Adrenal gland (tissue), 19 donors: ENCODE measurements at regions of chr3 and their contacts with region 1.

Region 1: DNA sequence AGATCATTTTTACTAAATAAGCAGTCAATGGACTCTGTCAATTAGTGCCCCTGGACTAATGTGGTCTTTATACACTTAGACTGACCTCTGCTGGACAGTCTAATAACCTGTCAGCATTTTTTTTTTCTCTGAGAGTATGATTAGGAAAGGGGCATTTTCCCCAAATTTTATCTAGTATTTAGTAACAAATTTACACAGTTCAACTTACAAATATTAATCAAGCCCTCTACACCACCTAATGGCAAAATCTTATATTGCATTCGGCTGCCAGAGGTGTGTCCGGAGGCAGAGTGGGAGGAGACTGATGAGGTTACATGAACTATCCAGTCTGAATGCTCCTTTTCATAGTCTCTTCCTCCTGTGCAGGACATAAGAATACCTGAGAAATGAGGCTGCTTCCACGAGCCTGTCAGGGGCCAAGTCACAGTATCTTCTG is 36.0 kb upstream of the COLQ start:
- DNase-seq: peak; percentile 54 to 84 (median 70)
- H3K4me3 ChIP-seq: no peak overlapping the region
- H3K27ac ChIP-seq: peak overlapping the region in 1 of 5 donors; percentile 1
- H3K4me1 ChIP-seq: peaks cover 0 to 13% of the 10 kb centered on the region in 2 donors
- H3K27me3 ChIP-seq: no peaks in the 10 kb centered on the region
- CTCF ChIP-seq: peak; percentile 45 to 79 (median 64)
- POLR2A ChIP-seq: no peak

Region 2: DNA sequence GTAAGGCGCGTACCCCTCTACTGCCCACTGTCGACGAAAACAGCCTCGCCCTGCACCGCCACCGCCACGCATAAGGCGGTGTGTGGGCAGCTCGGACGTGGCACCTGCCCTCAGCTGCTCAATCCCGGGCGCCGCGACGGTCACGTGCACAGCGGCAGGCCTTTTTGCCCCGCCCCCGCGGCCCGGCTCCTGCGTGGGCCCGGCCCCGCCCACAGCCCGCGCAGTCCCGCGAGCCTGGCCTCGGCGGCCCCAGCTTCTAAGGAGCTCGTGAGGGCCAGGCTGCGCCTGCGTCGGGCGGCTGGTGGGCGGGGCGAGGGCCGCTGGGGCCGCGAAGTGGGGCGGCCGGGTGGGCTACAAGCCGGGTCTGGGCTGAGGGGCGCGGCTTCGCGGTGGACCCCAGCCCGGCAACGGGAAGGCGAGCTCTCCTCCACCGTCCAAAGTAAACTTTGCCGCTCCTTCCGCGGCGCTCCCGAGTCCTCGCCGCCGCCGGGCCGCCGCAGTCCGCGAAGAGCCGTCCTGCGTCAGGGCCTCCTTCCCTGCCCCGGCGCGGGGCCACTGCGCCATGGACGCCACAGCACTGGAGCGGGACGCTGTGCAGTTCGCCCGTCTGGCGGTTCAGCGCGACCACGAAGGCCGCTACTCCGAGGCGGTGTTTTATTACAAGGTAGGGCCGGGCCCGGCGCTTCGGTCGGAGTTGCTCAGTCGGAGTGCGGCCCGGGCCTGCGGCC is 351.4 kb before region 1 on chr3 and contains the start of gene CAPN7:
- intact Hi-C with region 1: loop called in 1 of 2 experiments (anchors 10 kb)
- DNase-seq: peak; percentile 95 to 98 (median 96)
- H3K4me3 ChIP-seq: peak within 1 kb of the TSS; percentile 54 to 100 (median 92)
- H3K27ac ChIP-seq: peak within 1 kb of the TSS; percentile 98 to 100 (median 99)
- H3K4me1 ChIP-seq: peaks cover 20 to 33% of the 10 kb centered on the region in 2 donors
- H3K27me3 ChIP-seq: no peaks in the 10 kb centered on the region
- CTCF ChIP-seq: peak in 3 of 6 experiments; percentile 38 to 61 (median 39)
- POLR2A ChIP-seq: peak; percentile 79 to 96
- total RNA-seq, gene CAPN7: 31.1 to 54.9 (median 42.4) TPM

Region 3: GRCh38 chr3:15439476-15439875 is 118.1 kb before region 1 on chr3:
- intact Hi-C with region 1: loop called (anchors 5 to 10 kb)
- DNase-seq: peak in 3 of 7 donors; percentile 48 to 69 (median 57)
- H3K4me3 ChIP-seq: no peak overlapping the region
- H3K27ac ChIP-seq: no peak overlapping the region
- H3K4me1 ChIP-seq: peaks cover 0 to 22% of the 10 kb centered on the region in 2 donors
- H3K27me3 ChIP-seq: no peaks in the 10 kb centered on the region
- CTCF ChIP-seq: no peak
- POLR2A ChIP-seq: no peak

Region 4: DNA sequence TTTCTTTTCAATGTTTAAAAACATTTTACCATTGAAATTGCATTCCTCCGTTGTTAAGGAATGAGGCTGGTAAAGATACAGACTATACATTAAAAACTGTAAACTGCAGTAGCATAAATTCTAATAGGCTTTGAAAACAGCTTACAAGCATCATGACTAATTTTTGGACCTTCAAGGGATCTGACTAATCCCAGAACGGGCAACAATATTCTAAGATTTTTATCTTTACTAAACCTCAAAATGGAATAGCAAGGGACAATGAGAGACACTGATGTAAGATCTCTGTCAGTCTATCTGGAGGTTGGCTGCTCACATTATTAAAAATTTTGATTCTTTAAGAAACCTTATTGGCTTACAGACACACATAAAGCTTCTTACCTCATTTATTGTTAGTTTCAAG is 118.7 kb after region 1 on chr3:
- intact Hi-C with region 1: no loop called
- DNase-seq: no peak
- H3K4me3 ChIP-seq: no peak overlapping the region
- H3K27ac ChIP-seq: no peak overlapping the region
- H3K4me1 ChIP-seq: peaks cover 0 to 6% of the 10 kb centered on the region in 2 donors
- H3K27me3 ChIP-seq: no peaks in the 10 kb centered on the region
- CTCF ChIP-seq: no peak
- POLR2A ChIP-seq: no peak

Region 5: DNA sequence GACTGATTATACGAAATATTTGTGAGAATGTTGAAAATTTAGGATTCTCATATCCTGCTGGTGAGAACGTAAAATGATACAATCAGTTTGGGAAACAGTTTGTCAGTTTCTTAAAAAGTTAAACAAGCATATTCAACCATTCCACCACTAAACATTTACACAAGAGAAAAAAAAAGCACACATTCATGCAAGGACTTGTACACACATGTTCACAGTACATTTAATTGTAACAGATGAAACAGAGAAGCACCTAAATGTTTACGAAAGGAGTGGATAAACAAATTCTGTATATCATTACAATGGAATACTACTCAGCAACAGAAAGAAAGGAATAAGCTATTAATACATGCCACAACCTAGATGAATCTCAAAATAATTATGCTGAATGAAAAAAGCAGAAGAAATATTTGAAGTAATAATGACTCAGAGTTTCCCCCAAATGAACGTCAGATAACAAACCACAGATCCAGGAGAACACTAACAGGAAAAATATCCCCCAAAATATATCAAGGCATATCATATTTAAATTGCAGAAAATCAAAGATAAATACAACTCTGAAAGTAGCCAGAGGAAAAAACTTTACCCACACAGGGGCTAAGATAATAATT is 225.9 kb after region 1 on chr3:
- intact Hi-C with region 1: no loop called
- DNase-seq: no peak
- H3K4me3 ChIP-seq: no peak overlapping the region
- H3K27ac ChIP-seq: no peak overlapping the region
- H3K4me1 ChIP-seq: peaks cover 0 to 16% of the 10 kb centered on the region in 2 donors
- H3K27me3 ChIP-seq: no peaks in the 10 kb centered on the region
- CTCF ChIP-seq: no peak
- POLR2A ChIP-seq: no peak